ENCODE measurements at regions of chr2 and their contacts with region 1.

Region 1: DNA sequence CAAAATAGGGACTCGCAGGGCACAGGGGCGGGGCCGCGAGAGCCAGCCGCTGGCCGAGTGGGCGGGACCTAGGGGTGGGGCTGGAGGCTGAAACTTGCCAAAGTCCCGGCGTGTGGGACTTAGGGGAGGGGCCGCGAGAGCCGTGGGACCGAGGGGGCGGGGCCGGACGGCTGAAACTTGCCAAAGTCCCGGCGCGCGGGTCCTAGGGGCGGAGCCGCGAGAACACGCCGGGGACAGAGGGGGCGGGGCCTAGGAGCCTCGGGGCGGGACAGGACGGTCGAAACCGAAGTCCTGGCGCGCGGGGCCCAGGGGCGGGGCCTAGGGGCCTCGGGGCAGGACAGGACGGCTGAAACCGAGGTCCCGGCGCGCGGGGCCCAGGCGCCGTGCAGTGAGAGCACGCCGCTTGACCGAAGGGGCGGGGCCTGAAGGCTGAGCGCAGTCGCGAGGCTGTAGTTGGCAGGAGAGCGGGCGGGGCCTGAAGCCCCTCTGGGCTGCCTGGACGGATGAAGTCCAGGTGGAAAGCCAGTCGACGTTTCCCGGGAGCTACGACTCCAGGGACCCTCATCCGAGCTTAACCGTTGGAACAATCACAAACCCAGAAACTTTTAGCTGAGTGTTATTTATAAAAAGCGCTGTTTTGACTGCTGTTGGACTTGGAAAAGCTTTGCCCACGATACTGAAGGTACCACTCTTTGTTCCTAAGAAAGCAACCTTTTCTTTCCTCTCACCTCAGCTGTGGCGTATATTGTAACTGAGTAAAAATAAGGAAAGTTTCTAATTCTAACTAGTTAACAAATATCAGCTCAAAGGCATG is 475 bp upstream of the BARD1 start:
- DNase-seq: peak; percentile 75 to 100 (median 84)
- ATAC-seq: peak; percentile 89
- H3K4me3 ChIP-seq: peak overlapping the region; percentile 75
- H3K4me3 Mint-ChIP-seq: peak overlapping the region; percentile 88 to 98 (median 96)
- H3K27ac ChIP-seq: peak overlapping the region; percentile 72
- H3K27ac Mint-ChIP-seq: peak overlapping the region in 8 of 9 donors; percentile 56 to 95 (median 85)
- H3K4me1 ChIP-seq: peaks cover 0 to 7% of the 10 kb centered on the region in 2 donors
- H3K4me1 Mint-ChIP-seq: peaks cover 10 to 43% (median 35%) of the 10 kb centered on the region in 7 donors
- H3K27me3 ChIP-seq: no peaks in the 10 kb centered on the region
- H3K27me3 Mint-ChIP-seq: peaks cover 0 to 28% (median 9%) of the 10 kb centered on the region in 5 donors

Region 2: DNA sequence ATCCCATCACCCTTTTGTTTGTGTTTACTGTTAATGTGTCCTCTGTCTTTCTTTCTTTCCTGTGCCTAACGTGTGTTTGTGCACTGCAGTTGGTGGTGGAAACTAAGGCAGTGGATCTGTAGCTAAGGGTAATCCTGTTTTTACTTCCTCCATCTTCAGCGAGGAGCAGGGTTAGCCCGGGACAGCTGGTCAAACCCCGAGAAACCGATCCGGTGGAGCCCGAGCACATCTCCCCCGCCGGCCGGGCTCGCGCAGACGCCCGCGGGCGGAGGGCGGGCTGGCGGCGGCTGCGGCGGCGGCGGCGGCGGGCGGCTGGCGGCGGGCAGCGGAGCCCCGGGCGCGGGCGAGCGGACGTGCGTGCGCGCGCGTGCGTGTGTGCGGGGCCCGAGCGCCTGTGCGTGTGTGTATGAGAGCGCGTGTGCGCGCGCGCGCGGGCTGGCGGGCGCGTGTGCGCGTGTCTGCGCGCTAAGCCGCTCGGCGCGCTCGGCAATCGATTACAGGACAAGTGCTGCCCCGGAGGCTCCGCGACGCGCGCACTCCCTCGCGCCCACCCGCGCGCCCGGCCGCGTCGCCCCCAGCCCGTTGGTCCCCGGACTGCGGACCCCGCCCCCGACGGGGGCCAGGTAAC is 1658.4 kb before region 1 on chr2 and contains the start of gene IKZF2:
- CTCF ChIA-PET with region 1: no interaction called
- POLR2A ChIA-PET with region 1: no interaction called
- intact Hi-C with region 1: loop called (anchors 2 to 5 kb)
- DNase-seq: peak; percentile 58 to 85 (median 69)
- ATAC-seq: peak; percentile 86
- H3K4me3 ChIP-seq: peak within 1 kb of the TSS; percentile 69
- H3K4me3 Mint-ChIP-seq: peak within 1 kb of the TSS; percentile 83 to 96 (median 92)
- H3K27ac ChIP-seq: peak within 1 kb of the TSS; percentile 73
- H3K27ac Mint-ChIP-seq: peak within 1 kb of the TSS; percentile 71 to 92 (median 83)
- H3K4me1 ChIP-seq: no peaks in the 10 kb centered on the region
- H3K4me1 Mint-ChIP-seq: peaks cover 6 to 47% (median 36%) of the 10 kb centered on the region in 7 donors
- H3K27me3 ChIP-seq: peaks cover 0 to 4% of the 10 kb centered on the region in 2 donors
- H3K27me3 Mint-ChIP-seq: peaks cover 41 to 70% (median 50%) of the 10 kb centered on the region in 5 donors
- total RNA-seq, gene IKZF2: 3.4 to 23.4 (median 7.3) TPM

Region 3: GRCh38 chr2:214679736-214680135 is 130.2 kb before region 1 on chr2:
- CTCF ChIA-PET with region 1: interaction called, 4 read pairs
- POLR2A ChIA-PET with region 1: no interaction called
- intact Hi-C with region 1: loop called (anchors 2 to 5 kb)
- DNase-seq: no peak
- ATAC-seq: no peak
- H3K4me3 ChIP-seq: no peak overlapping the region
- H3K4me3 Mint-ChIP-seq: peak overlapping the region in 2 of 10 donors; percentile 32 to 41
- H3K27ac ChIP-seq: no peak overlapping the region
- H3K27ac Mint-ChIP-seq: no peak overlapping the region
- H3K4me1 ChIP-seq: no peaks in the 10 kb centered on the region
- H3K4me1 Mint-ChIP-seq: peaks cover 2 to 18% (median 15%) of the 10 kb centered on the region in 7 donors
- H3K27me3 ChIP-seq: no peaks in the 10 kb centered on the region
- H3K27me3 Mint-ChIP-seq: peaks cover 4 to 10% (median 5%) of the 10 kb centered on the region in 5 donors

Region 4: GRCh38 chr2:215311625-215312396 is 501.9 kb after region 1 on chr2 and contains the start of gene ATIC:
- CTCF ChIA-PET with region 1: no interaction called
- POLR2A ChIA-PET with region 1: no interaction called
- intact Hi-C with region 1: loop called (anchors 1 kb)
- DNase-seq: peak; percentile 67 to 92 (median 83)
- ATAC-seq: peak; percentile 98
- H3K4me3 ChIP-seq: peak within 1 kb of the TSS; percentile 98
- H3K4me3 Mint-ChIP-seq: peak within 1 kb of the TSS; percentile 86 to 95 (median 93)
- H3K27ac ChIP-seq: peak within 1 kb of the TSS; percentile 74
- H3K27ac Mint-ChIP-seq: peak within 1 kb of the TSS; percentile 84 to 97 (median 92)
- H3K4me1 ChIP-seq: peaks cover 13 to 16% of the 10 kb centered on the region in 2 donors
- H3K4me1 Mint-ChIP-seq: peaks cover 11 to 42% (median 37%) of the 10 kb centered on the region in 7 donors
- H3K27me3 ChIP-seq: no peaks in the 10 kb centered on the region
- H3K27me3 Mint-ChIP-seq: peaks cover 0 to 2% (median 0%) of the 10 kb centered on the region in 5 donors
- total RNA-seq, gene ATIC: 62.1 to 170 (median 83.2) TPM

Region 5: DNA sequence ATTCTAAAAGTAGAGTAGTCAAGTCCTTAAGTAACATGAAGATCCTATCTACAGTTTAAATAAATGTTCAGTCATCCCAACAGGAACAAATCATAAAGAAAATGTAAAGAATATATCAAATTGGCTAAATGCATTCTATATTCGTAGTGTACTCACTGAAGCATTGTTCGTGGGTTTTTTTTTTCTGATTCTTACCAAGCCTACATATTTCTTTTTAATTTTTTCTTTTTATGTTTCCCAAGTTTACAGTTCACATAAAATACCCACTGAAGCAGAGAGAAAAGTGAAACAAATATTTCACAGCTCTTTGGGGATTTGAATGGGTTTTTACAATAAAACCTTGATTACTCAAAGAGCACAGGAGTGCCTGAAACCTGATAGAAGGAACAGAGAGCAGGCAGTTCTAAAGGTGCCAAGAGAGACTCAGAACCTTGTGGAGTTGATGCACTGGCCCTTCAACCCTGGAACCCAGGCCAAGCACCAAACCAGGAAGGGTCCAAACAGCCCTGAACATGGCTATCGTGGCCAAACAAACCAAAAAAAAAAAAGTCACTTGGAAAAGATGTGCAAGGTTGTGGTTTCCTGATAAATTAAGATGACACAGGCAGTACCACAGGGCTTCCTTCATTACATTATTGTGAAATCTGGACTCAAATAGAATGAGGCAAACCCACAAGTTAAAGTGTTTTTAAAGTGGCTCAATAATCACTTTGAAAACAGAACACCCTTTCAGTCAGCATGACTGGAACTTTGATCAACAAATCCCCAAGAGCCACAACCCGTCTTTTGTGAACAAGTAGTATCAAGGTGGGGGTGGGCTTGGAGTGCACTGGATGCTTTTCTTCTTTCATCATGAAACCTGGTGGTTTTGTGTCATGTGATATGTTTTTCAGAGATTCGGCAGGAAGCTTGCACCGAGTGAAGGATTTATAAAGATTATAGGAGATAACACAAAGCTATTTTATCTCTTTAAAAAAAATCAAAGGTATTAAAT is 870.9 kb after region 1 on chr2:
- CTCF ChIA-PET with region 1: no interaction called
- POLR2A ChIA-PET with region 1: no interaction called
- intact Hi-C with region 1: loop called in 1 of 2 experiments (anchors 2 kb)
- DNase-seq: peak in 8 of 9 donors; percentile 23 to 89 (median 78)
- ATAC-seq: peak; percentile 90
- H3K4me3 ChIP-seq: no peak overlapping the region
- H3K4me3 Mint-ChIP-seq: peak overlapping the region; percentile 45 to 78 (median 65)
- H3K27ac ChIP-seq: no peak overlapping the region
- H3K27ac Mint-ChIP-seq: peak overlapping the region; percentile 50 to 87 (median 82)
- H3K4me1 ChIP-seq: peaks cover 6 to 16% of the 10 kb centered on the region in 2 donors
- H3K4me1 Mint-ChIP-seq: peaks cover 19 to 67% (median 54%) of the 10 kb centered on the region in 7 donors
- H3K27me3 ChIP-seq: no peaks in the 10 kb centered on the region
- H3K27me3 Mint-ChIP-seq: no peaks in the 10 kb centered on the region

Region 6: DNA sequence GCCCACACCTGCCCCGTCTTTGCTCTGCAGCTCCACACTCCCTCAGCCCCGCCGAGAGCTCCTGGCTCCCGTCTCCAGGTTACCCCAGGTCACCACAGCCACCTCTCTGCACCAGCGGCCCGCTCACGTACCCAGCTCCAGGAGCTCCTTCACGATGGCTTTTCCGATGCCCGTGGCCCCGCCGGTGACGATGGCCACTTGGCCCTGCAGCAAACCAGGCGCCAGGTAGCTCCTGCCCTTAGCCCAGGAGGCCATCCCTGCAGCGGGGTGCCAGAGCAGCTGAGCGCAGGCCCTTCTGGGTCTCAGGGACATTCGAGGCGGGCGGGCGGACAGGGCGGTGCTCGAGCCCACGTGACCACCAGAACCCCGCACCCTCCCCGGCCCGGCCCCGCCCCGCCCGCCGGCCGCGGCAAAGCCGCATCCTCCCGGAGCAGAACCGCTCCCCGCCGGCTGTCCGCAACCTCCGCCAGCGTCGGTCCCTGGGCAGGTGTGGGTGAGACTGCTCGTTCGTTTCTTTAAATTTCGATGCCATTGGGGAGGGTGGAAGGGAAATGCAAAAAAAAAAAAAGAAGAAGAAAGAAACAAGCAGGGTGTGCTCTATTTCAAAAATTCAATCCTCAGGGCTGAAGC is 1271.6 kb after region 1 on chr2 and contains the starts of genes PECR and TMEM169:
- CTCF ChIA-PET with region 1: no interaction called
- POLR2A ChIA-PET with region 1: no interaction called
- intact Hi-C with region 1: loop called (anchors 10 kb)
- DNase-seq: peak; percentile 39 to 81 (median 62)
- ATAC-seq: peak; percentile 93
- H3K4me3 ChIP-seq: peak within 1 kb of the TSS; percentile 95
- H3K4me3 Mint-ChIP-seq: peak within 1 kb of the TSS; percentile 76 to 97 (median 94)
- H3K27ac ChIP-seq: peak within 1 kb of the TSS; percentile 77
- H3K27ac Mint-ChIP-seq: peak within 1 kb of the TSS; percentile 86 to 97 (median 95)
- H3K4me1 ChIP-seq: peaks cover 42 to 57% of the 10 kb centered on the region in 2 donors
- H3K4me1 Mint-ChIP-seq: peaks cover 47 to 76% (median 62%) of the 10 kb centered on the region in 7 donors
- H3K27me3 ChIP-seq: no peaks in the 10 kb centered on the region
- H3K27me3 Mint-ChIP-seq: no peaks in the 10 kb centered on the region
- total RNA-seq, gene PECR: 15.7 to 29.9 (median 20.6) TPM
- total RNA-seq, gene TMEM169: 2.0 to 5.1 (median 2.6) TPM

Region 7: DNA sequence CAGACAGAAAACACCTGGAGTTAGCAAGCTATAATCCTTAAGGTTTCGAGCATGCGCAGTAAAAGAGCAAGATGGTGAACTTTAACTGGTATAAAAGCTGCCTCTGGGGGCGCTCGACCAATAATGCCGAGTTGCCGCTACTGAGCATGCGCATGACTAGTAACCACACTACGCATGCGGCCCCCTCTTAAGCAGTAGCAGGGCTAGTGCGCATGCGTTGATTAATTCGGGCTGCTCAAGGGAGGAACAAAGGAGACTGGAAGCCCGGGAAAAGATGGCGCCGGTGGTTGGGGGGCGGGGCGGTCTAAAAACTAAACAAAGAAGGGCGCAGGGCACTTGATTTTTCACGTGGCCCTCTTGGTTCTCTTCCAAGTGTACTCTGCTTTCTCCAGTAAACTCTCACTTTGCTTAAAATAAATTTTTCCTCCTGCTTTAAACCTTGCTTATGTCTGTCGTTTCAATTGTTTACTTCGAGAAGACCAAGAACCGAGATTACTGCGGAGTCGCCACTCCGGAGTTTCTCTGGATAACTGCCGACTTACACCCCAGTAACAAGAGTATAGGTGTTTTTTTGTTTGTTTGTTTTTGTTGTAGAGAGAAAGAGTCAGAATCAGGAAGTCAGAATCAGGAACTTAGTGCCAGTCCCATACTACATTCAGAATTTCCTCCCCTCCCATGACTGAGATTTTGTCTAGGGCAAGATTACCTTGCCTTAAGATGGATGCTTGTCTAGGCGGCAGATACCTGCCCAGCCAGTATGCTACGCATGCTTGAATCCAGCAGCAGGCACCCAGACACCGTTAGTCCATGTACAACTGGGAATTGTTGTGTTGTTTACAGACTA is 1305.0 kb after region 1 on chr2:
- CTCF ChIA-PET with region 1: no interaction called
- POLR2A ChIA-PET with region 1: no interaction called
- intact Hi-C with region 1: loop called in 1 of 2 experiments (anchors 2 kb)
- DNase-seq: peak; percentile 91 to 98 (median 96)
- ATAC-seq: peak; percentile 94
- H3K4me3 ChIP-seq: peak overlapping the region; percentile 65
- H3K4me3 Mint-ChIP-seq: peak overlapping the region; percentile 88 to 99 (median 94)
- H3K27ac ChIP-seq: peak overlapping the region; percentile 77
- H3K27ac Mint-ChIP-seq: peak overlapping the region; percentile 89 to 99 (median 97)
- H3K4me1 ChIP-seq: peaks cover 35 to 58% of the 10 kb centered on the region in 2 donors
- H3K4me1 Mint-ChIP-seq: peaks cover 51 to 100% (median 96%) of the 10 kb centered on the region in 7 donors
- H3K27me3 ChIP-seq: no peaks in the 10 kb centered on the region
- H3K27me3 Mint-ChIP-seq: peaks cover 0 to 2% (median 0%) of the 10 kb centered on the region in 5 donors